Dendritic cell treated with granulocyte-macrophage colony-stimulating factor and Interleukin-4, amounts not matched to agents 40 ng/mL and 50 ng/mL, for 4 days (primary cell): ENCODE measurements at regions of chr3 and their contacts with region 1.

Region 1: DNA sequence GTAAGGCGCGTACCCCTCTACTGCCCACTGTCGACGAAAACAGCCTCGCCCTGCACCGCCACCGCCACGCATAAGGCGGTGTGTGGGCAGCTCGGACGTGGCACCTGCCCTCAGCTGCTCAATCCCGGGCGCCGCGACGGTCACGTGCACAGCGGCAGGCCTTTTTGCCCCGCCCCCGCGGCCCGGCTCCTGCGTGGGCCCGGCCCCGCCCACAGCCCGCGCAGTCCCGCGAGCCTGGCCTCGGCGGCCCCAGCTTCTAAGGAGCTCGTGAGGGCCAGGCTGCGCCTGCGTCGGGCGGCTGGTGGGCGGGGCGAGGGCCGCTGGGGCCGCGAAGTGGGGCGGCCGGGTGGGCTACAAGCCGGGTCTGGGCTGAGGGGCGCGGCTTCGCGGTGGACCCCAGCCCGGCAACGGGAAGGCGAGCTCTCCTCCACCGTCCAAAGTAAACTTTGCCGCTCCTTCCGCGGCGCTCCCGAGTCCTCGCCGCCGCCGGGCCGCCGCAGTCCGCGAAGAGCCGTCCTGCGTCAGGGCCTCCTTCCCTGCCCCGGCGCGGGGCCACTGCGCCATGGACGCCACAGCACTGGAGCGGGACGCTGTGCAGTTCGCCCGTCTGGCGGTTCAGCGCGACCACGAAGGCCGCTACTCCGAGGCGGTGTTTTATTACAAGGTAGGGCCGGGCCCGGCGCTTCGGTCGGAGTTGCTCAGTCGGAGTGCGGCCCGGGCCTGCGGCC is at the start of gene CAPN7:
- H3K4me3 Mint-ChIP-seq: peak within 1 kb of the TSS; percentile 91
- H3K27ac Mint-ChIP-seq: peak within 1 kb of the TSS; percentile 93
- H3K4me1 Mint-ChIP-seq: peaks cover 22% of the 10 kb centered on the region
- H3K27me3 Mint-ChIP-seq: no peaks in the 10 kb centered on the region

Region 2: DNA sequence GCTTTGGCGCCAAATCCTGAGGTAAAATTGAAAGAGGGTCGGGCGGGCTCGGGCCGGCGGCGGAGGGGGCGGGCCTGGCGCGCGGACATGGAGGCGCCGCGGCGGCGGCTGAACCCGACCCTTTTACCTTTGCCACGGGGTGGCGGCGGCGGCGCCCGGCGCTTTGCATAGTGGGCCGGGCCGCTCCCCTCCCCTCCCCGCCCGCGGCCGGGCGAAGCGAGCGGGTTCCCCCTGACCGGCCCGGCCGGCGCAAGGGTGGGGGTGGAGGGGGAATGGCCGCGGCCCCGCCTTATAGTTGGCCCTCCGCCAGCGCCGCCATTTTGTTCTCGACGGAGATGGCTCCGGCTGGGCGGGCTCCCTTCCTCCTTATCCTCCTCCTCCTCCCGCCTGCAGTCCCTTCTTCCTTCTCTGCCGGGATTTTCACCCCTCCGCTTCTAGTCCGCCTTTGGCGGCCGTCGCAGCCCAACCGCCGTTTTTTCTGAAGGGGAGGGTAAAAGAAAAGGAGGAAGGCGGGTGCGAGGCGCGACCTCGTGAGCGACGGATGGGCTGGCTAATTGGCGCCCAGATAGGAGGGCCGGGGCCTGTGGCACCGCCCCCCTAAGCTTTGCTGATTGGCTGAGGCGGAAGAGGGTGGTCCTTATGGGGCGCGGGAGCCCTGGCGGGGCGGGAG is 258.1 kb before region 1 on chr3:
- intact Hi-C with region 1: loop called (anchors 5 kb)
- H3K4me3 Mint-ChIP-seq: peak overlapping the region; percentile 100
- H3K27ac Mint-ChIP-seq: peak overlapping the region; percentile 100
- H3K4me1 Mint-ChIP-seq: peaks cover 42% of the 10 kb centered on the region
- H3K27me3 Mint-ChIP-seq: no peaks in the 10 kb centered on the region

Region 3: GRCh38 chr3:15064835-15065549 is 141.1 kb before region 1 on chr3 and contains the start of gene MRPS25:
- intact Hi-C with region 1: no loop called
- H3K4me3 Mint-ChIP-seq: peak within 1 kb of the TSS; percentile 91
- H3K27ac Mint-ChIP-seq: peak within 1 kb of the TSS; percentile 97
- H3K4me1 Mint-ChIP-seq: peaks cover 16% of the 10 kb centered on the region
- H3K27me3 Mint-ChIP-seq: no peaks in the 10 kb centered on the region

Region 4: DNA sequence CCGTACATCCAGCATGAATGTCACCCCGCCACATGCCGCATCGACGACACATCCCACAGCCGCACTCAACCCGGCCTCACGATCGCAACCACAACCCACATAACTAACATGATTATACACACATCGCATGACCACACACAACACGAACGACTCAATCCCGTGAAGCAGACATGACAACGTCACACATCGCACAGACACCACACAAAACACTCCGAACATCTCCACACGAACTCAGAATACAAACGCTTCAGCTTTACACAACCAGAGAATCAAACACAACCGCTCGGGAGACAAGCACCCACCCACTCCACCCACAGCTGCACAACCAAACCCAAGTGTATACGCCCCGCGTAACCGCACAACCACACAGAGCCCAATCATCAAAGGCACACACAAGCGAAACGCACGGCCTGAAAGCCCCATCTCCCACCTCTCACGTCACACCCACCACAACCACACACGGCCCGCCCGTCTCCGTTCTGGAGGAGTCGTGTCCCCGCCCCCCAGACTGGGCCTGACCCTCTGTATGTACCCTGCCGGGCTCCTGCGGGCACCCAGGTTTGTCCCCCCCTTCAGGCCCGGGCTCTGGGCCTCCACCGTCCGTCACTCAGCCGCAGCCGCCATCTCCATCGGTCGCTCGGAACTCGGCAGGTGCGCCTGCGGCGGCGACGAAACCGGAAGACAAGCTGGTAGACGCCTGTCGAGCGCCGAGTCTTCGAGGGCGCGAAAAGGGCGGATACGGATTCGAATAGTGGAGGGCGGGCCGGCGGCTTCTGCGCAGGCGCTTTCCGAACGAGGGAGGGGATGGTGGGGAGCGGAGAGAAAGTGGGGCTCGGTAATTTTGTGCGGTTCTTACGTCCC is 107.4 kb before region 1 on chr3 and contains the start of gene RBSN:
- intact Hi-C with region 1: loop called (anchors 5 kb)
- H3K4me3 Mint-ChIP-seq: peak within 1 kb of the TSS; percentile 88
- H3K27ac Mint-ChIP-seq: peak within 1 kb of the TSS; percentile 95
- H3K4me1 Mint-ChIP-seq: peaks cover 49% of the 10 kb centered on the region
- H3K27me3 Mint-ChIP-seq: no peaks in the 10 kb centered on the region

Region 5: GRCh38 chr3:15113463-15113862 is 92.6 kb before region 1 on chr3:
- intact Hi-C with region 1: no loop called
- H3K4me3 Mint-ChIP-seq: no peak overlapping the region
- H3K27ac Mint-ChIP-seq: no peak overlapping the region
- H3K4me1 Mint-ChIP-seq: peaks cover 5% of the 10 kb centered on the region
- H3K27me3 Mint-ChIP-seq: peaks cover 10% of the 10 kb centered on the region

Region 6: GRCh38 chr3:15171096-15171495 is 35.0 kb before region 1 on chr3:
- intact Hi-C with region 1: no loop called
- H3K4me3 Mint-ChIP-seq: no peak overlapping the region
- H3K27ac Mint-ChIP-seq: no peak overlapping the region
- H3K4me1 Mint-ChIP-seq: no peaks in the 10 kb centered on the region
- H3K27me3 Mint-ChIP-seq: peaks cover 7% of the 10 kb centered on the region

Region 7: GRCh38 chr3:15300323-15301078 is 94.4 kb after region 1 on chr3:
- intact Hi-C with region 1: no loop called
- H3K4me3 Mint-ChIP-seq: no peak overlapping the region
- H3K27ac Mint-ChIP-seq: peak overlapping the region; percentile 18
- H3K4me1 Mint-ChIP-seq: peaks cover 43% of the 10 kb centered on the region
- H3K27me3 Mint-ChIP-seq: no peaks in the 10 kb centered on the region

Region 8: DNA sequence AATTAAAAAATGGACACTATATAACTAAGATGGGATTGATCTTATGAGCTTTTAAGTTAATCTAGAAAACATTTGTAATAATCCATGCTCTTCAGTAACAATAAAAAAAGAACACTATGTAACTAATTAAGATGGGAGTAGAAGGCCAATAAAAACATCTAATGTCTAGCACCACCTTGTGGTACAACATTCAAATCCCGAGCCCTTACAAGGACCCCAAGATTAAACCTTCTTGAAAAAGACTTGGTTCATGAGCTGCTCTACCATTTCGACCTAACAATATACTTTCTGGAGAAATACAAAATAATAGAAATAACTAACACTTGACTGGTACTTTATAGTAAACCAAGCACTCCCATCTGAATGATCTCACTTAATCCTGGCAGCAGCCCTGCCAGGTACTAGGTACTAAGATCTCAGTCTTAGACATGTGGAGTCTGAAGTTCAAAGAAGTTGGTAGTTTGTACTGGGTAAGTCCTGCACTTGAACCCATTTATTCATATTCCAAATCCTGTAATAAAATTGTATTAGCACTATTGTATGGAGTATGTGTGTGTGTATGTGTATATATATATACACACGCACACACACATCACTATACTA is 199.5 kb after region 1 on chr3:
- intact Hi-C with region 1: loop called (anchors 1 kb)
- H3K4me3 Mint-ChIP-seq: no peak overlapping the region
- H3K27ac Mint-ChIP-seq: no peak overlapping the region
- H3K4me1 Mint-ChIP-seq: peaks cover 45% of the 10 kb centered on the region
- H3K27me3 Mint-ChIP-seq: no peaks in the 10 kb centered on the region

Region 9: GRCh38 chr3:15557511-15557946 is 351.4 kb after region 1 on chr3:
- intact Hi-C with region 1: loop called (anchors 2 kb)
- H3K4me3 Mint-ChIP-seq: no peak overlapping the region
- H3K27ac Mint-ChIP-seq: no peak overlapping the region
- H3K4me1 Mint-ChIP-seq: peaks cover 21% of the 10 kb centered on the region
- H3K27me3 Mint-ChIP-seq: no peaks in the 10 kb centered on the region

Region 10: GRCh38 chr3:15815696-15816095 is 609.6 kb after region 1 on chr3:
- intact Hi-C with region 1: loop called (anchors 2 kb)
- H3K4me3 Mint-ChIP-seq: no peak overlapping the region
- H3K27ac Mint-ChIP-seq: no peak overlapping the region
- H3K4me1 Mint-ChIP-seq: no peaks in the 10 kb centered on the region
- H3K27me3 Mint-ChIP-seq: no peaks in the 10 kb centered on the region